GM12878 (cell line): ENCODE measurements at regions of chr22 and their contacts with region 1.

Region 1: GRCh38 chr22:40679964-40680818 is 907 bp downstream of the MCHR1 start:
- DNase-seq: no peak
- ATAC-seq: no peak
- H3K4me3 ChIP-seq: no peak overlapping the region
- H3K27ac ChIP-seq: no peak overlapping the region
- H3K4me1 ChIP-seq: no peaks in the 10 kb centered on the region
- H3K27me3 ChIP-seq: peaks cover 0 to 3% of the 10 kb centered on the region in 2 experiments; a peak in 3 of 4 replicates
- CTCF ChIP-seq: no peak
- EP300 ChIP-seq: no peak
- POLR2A ChIP-seq: no peak
- RAD21 ChIP-seq: no peak

Region 2: DNA sequence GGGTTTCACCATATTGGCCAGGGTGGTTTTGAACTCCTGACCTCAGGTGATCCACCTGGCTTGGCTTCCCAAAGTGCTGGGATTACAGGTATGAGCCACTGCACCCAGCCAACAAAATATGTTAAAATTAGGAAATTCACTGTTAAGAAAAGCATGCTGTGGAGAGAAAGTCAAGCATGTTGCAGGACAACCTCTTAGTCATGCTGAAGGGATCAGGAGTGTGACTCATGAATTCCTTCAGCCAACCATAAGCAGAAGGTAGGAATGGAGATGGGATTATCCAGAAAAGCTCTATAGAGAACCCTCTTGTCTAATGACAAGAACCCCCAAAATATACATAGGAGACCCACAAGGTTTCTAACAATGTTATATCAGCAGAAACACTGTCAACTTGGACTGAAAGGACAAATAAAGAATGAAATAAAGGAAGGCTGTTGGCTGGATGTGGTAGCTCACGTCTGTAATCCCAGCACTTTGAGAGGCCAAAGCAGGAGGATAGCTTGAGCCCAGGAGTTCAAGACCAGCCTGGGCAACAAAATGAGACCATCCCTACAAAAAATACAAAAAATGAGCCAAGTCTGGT is 59.6 kb before region 1 on chr22:
- CTCF ChIA-PET with region 1: no interaction called
- POLR2A ChIA-PET with region 1: no interaction called
- RAD21 ChIA-PET with region 1: no interaction called
- SMC1A ChIA-PET with region 1: no interaction called
- in situ Hi-C with region 1: no loop called
- intact Hi-C with region 1: no loop called
- DNase-seq: no peak
- ATAC-seq: no peak
- H3K4me3 ChIP-seq: no peak overlapping the region
- H3K27ac ChIP-seq: no peak overlapping the region
- H3K4me1 ChIP-seq: no peaks in the 10 kb centered on the region
- H3K27me3 ChIP-seq: no peaks in the 10 kb centered on the region
- CTCF ChIP-seq: no peak
- EP300 ChIP-seq: no peak
- POLR2A ChIP-seq: no peak
- RAD21 ChIP-seq: no peak

Region 3: DNA sequence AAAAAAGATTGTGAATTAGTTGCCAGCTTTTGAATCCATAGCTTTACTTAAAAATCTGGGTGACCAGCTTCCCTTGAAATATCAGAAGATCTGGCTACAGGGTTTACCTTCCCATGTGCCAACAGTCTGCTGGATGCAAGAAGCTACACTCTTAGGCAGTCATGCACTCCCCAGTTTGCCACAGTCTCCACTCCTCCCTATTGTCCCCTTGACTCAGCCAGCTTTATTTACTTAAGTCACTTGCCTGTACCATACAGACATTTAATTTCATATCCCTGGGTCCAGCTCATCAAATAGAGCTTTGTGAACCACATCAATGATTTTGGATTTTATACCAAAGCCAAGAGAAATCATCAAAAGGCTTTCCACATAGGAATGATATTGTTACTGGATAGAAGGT is 11.3 kb after region 1 on chr22:
- CTCF ChIA-PET with region 1: interaction called, 11 read pairs
- POLR2A ChIA-PET with region 1: no interaction called
- RAD21 ChIA-PET with region 1: no interaction called
- SMC1A ChIA-PET with region 1: interaction called, 9 read pairs
- in situ Hi-C with region 1: no loop called
- intact Hi-C with region 1: no loop called
- DNase-seq: no peak
- ATAC-seq: no peak
- H3K4me3 ChIP-seq: no peak overlapping the region
- H3K27ac ChIP-seq: no peak overlapping the region
- H3K4me1 ChIP-seq: no peaks in the 10 kb centered on the region
- H3K27me3 ChIP-seq: no peaks in the 10 kb centered on the region; a peak in 2 of 4 replicates
- CTCF ChIP-seq: no peak
- EP300 ChIP-seq: no peak
- POLR2A ChIP-seq: no peak
- RAD21 ChIP-seq: no peak

Region 4: DNA sequence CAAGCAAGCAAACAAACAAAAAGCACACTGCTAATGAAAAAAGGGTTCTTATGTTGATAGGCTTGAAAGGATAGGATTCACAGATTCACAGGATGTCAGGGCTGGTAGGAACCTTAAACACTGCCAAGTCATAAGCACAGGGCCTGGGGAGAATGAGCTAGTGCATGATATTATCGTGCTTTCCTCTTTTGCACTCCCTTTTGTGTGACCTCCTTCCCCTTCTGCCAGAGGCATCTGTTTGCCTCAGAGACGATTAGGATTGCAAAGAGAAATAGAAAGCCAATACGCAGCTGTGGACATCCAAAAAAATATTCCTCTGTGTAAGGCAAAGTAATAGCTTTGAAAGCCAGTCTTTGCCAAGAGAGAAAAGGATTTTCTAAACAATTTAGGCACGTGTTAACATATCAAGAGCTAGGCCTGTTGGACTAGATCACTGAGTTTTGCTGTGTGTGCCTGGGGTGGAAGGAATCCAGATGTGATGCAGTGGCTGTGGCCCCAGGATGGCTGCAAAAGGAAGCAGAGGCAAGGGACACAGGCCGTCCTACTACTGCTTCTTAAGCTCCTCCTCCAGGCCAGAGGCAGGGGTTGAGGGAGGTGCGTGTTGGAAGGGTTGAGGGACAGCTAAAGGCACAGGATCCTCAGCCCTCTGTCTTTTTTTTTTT is 29.7 kb after region 1 on chr22:
- CTCF ChIA-PET with region 1: interaction called, 3 read pairs
- POLR2A ChIA-PET with region 1: interaction called, 3 read pairs
- RAD21 ChIA-PET with region 1: interaction called, 4 read pairs
- SMC1A ChIA-PET with region 1: interaction called, 10 read pairs
- in situ Hi-C with region 1: no loop called
- intact Hi-C with region 1: no loop called
- DNase-seq: no peak
- ATAC-seq: 0 out of 3 replicates have a peak, but pooled peaks have one; percentile 28
- H3K4me3 ChIP-seq: no peak overlapping the region
- H3K27ac ChIP-seq: no peak overlapping the region
- H3K4me1 ChIP-seq: no peaks in the 10 kb centered on the region
- H3K27me3 ChIP-seq: no peaks in the 10 kb centered on the region; a peak in 2 of 4 replicates
- CTCF ChIP-seq: no peak
- EP300 ChIP-seq: no peak
- POLR2A ChIP-seq: no peak
- RAD21 ChIP-seq: no peak

Region 5: DNA sequence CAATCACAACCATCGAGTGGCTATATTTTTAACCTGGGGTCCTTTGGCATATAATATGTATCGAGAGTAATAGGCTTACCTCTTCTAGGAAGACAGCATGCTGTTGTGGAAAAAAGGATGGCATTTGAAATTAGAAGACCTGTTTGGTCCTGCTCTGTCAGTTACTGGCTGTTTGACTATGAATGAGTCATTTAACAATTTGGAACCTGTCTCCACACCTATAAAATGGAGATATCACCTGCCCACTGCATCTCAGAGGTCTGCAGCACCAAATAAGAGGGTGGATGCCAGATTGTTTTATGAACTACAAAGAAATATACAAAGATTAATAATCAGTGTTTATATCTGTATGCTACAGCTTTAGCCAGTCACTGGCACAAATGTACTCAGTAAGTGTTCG is 78.2 kb after region 1 on chr22:
- CTCF ChIA-PET with region 1: interaction called, 48 read pairs
- POLR2A ChIA-PET with region 1: interaction called, 8 read pairs
- RAD21 ChIA-PET with region 1: interaction called, 23 read pairs
- SMC1A ChIA-PET with region 1: interaction called, 11 read pairs
- in situ Hi-C with region 1: no loop called
- intact Hi-C with region 1: loop called (anchors 1 kb)
- DNase-seq: no peak
- ATAC-seq: no peak
- H3K4me3 ChIP-seq: no peak overlapping the region
- H3K27ac ChIP-seq: no peak overlapping the region
- H3K4me1 ChIP-seq: no peaks in the 10 kb centered on the region
- H3K27me3 ChIP-seq: no peaks in the 10 kb centered on the region
- CTCF ChIP-seq: no peak
- EP300 ChIP-seq: no peak
- POLR2A ChIP-seq: no peak
- RAD21 ChIP-seq: no peak

Region 6: GRCh38 chr22:40764763-40765441 is 84.7 kb after region 1 on chr22:
- CTCF ChIA-PET with region 1: interaction called, 48 read pairs
- POLR2A ChIA-PET with region 1: no interaction called
- RAD21 ChIA-PET with region 1: interaction called, 23 read pairs
- SMC1A ChIA-PET with region 1: interaction called, 11 read pairs
- in situ Hi-C with region 1: no loop called
- intact Hi-C with region 1: loop called (anchors 1 kb)
- DNase-seq: peak; percentile 31
- ATAC-seq: peak; percentile 72
- H3K4me3 ChIP-seq: no peak overlapping the region
- H3K27ac ChIP-seq: peak overlapping the region; percentile 45
- H3K4me1 ChIP-seq: peaks cover 16% of the 10 kb centered on the region; the same call in 1 of the 2 replicates
- H3K27me3 ChIP-seq: no peaks in the 10 kb centered on the region
- CTCF ChIP-seq: no peak
- EP300 ChIP-seq: no peak
- POLR2A ChIP-seq: no peak
- RAD21 ChIP-seq: 0 out of 2 replicates have a peak, but pooled peaks have one; percentile 11

Region 7: GRCh38 chr22:40818747-40819598 is 138.8 kb after region 1 on chr22 and contains the start of gene SLC25A17:
- CTCF ChIA-PET with region 1: interaction called, 18 read pairs
- POLR2A ChIA-PET with region 1: no interaction called
- RAD21 ChIA-PET with region 1: interaction called, 12 read pairs
- SMC1A ChIA-PET with region 1: interaction called, 3 read pairs
- in situ Hi-C with region 1: no loop called
- intact Hi-C with region 1: loop called (anchors 5 kb)
- DNase-seq: peak; percentile 39
- ATAC-seq: peak; percentile 93
- H3K4me3 ChIP-seq: peak within 1 kb of the TSS; percentile 89
- H3K27ac ChIP-seq: peak within 1 kb of the TSS; percentile 84
- H3K4me1 ChIP-seq: no peaks in the 10 kb centered on the region
- H3K27me3 ChIP-seq: no peaks in the 10 kb centered on the region
- CTCF ChIP-seq: peak; percentile 30 to 41 (median 34); a peak in 3 of 6 replicates
- EP300 ChIP-seq: no peak
- POLR2A ChIP-seq: peak; percentile 70
- RAD21 ChIP-seq: no peak
- polyA plus RNA-seq, gene SLC25A17: 77.7 to 113 TPM

Region 8: DNA sequence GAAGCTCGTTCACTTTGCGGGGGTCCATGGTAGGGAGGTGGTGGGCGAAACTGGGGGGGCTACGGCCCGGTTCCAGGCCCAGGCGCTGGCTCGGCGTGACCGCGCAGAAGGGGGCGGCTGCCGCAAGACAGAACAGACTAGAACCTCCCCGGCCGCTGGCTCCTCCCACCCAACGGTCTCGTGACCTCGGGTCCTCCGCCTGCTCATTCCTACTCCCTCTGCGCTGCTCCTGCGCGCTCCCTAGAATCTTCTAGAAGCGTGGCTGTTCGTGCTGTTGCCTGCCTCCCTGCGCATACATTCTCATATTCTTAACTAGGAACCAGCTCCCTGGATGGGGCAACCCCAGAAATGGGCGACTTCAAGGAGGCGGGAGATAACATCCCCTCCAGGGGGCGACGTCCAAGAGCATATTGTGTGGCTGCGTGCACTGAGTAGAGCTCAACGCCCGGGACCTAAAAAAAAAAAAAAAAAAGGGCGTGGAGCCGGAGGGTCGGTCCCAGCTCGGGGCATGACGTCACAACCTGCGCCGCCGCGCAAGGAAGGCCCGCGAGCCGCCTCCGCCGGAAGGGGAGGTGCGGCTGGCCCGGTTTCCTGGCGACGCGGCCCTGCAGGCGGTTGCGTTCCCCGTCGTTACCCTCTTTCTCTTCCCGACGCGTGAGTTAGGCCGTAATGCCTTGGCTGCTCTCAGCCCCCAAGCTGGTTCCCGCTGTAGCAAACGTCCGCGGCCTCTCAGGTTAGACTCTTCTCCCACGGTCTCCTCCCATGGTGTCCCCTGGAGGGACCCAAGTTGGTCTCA is 176.5 kb after region 1 on chr22 and contains the starts of genes ST13 and XPNPEP3:
- CTCF ChIA-PET with region 1: interaction called, 15 read pairs
- POLR2A ChIA-PET with region 1: no interaction called
- RAD21 ChIA-PET with region 1: interaction called, 7 read pairs
- SMC1A ChIA-PET with region 1: interaction called, 4 read pairs
- in situ Hi-C with region 1: no loop called
- intact Hi-C with region 1: no loop called
- DNase-seq: peak; percentile 82
- ATAC-seq: peak; percentile 96
- H3K4me3 ChIP-seq: peak within 1 kb of the TSS; percentile 98
- H3K27ac ChIP-seq: peak within 1 kb of the TSS; percentile 96
- H3K4me1 ChIP-seq: peaks cover 4% of the 10 kb centered on the region
- H3K27me3 ChIP-seq: no peaks in the 10 kb centered on the region
- CTCF ChIP-seq: peak; percentile 21 to 33 (median 30); a peak in 3 of 6 replicates
- EP300 ChIP-seq: peak in 1 of 2 experiments; percentile 60; a peak in 2 of 4 replicates
- POLR2A ChIP-seq: peak; percentile 79
- RAD21 ChIP-seq: no peak
- polyA plus RNA-seq, gene ST13: 52.5 to 86.9 TPM
- polyA plus RNA-seq, gene XPNPEP3: 6.7 to 7.5 TPM